Naive thymus-derived CD4-positive, alpha-beta T cell (primary cell): ENCODE measurements at regions of chr10 and their contacts with region 1.

Region 1: GRCh38 chr10:28676968-28677887 is at the start of gene BAMBI:
- DNase-seq: peak; percentile 86 to 95 (median 90)
- ATAC-seq: peak; percentile 97
- H3K4me3 ChIP-seq: peak within 1 kb of the TSS; percentile 57
- H3K4me3 Mint-ChIP-seq: peak within 1 kb of the TSS; percentile 79 to 94 (median 84)
- H3K27ac ChIP-seq: no peak within 1 kb of the TSS
- H3K27ac Mint-ChIP-seq: peak within 1 kb of the TSS in 3 of 9 donors; percentile 24 to 52 (median 43)
- H3K4me1 ChIP-seq: peaks cover 0 to 26% of the 10 kb centered on the region in 2 donors
- H3K4me1 Mint-ChIP-seq: peaks cover 19 to 32% (median 26%) of the 10 kb centered on the region in 7 donors
- H3K27me3 ChIP-seq: peaks cover 11 to 20% of the 10 kb centered on the region in 2 donors
- H3K27me3 Mint-ChIP-seq: peaks cover 63 to 80% (median 70%) of the 10 kb centered on the region in 5 donors
- total RNA-seq, gene BAMBI: 0.12 to 1.6 (median 0.80) TPM in 4 of 5 experiments, not detected in the other

Region 2: GRCh38 chr10:28796606-28797512 is 119.6 kb after region 1 on chr10:
- CTCF ChIA-PET with region 1: no interaction called
- POLR2A ChIA-PET with region 1: no interaction called
- intact Hi-C with region 1: loop called in 1 of 2 experiments (anchors 5 kb)
- DNase-seq: no peak
- ATAC-seq: no peak
- H3K4me3 ChIP-seq: no peak overlapping the region
- H3K4me3 Mint-ChIP-seq: no peak overlapping the region
- H3K27ac ChIP-seq: no peak overlapping the region
- H3K27ac Mint-ChIP-seq: no peak overlapping the region
- H3K4me1 ChIP-seq: no peaks in the 10 kb centered on the region
- H3K4me1 Mint-ChIP-seq: no peaks in the 10 kb centered on the region
- H3K27me3 ChIP-seq: no peaks in the 10 kb centered on the region
- H3K27me3 Mint-ChIP-seq: peaks cover 0 to 4% (median 4%) of the 10 kb centered on the region in 5 donors

Region 3: DNA sequence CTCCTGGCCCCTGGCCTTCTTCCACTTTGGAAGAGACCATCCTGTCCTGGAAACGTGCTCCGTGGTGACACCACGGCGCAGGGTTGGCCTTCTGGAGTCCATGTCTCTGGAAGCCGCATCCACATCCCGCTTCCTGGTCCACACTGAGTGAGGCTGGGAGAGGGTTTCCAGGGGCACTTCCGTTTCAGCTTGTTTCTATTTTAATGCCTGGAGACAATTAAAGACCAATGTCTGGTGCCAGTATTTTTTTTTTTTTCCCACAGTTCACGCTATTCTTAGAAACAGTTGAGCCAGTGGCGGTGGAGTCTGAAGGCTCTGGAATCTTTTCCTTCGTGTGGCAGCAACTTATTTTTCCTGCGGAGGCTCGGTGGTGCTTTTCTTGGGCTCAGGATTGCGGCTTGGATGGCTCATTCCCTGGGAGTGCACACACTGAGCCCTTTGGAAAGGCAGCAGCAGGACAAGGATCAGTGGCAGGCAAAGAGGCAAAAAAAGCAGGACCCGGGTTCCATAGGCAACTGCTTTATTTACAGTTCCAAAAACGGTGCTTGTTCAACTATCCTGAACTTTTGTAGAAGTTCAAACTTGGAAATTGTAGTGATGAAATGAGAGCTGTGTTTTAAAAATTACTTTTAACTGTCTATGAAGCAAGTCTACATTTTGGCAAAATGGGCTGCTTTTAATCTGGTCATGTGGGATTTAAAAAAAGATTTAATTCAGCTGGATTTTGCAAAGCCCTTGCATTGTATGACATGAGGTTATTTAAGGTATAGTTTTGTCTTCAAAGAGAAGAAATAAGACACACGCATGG is 202.9 kb after region 1 on chr10:
- CTCF ChIA-PET with region 1: no interaction called
- POLR2A ChIA-PET with region 1: no interaction called
- intact Hi-C with region 1: loop called in 1 of 2 experiments (anchors 5 kb)
- DNase-seq: no peak
- ATAC-seq: no peak
- H3K4me3 ChIP-seq: no peak overlapping the region
- H3K4me3 Mint-ChIP-seq: no peak overlapping the region
- H3K27ac ChIP-seq: no peak overlapping the region
- H3K27ac Mint-ChIP-seq: no peak overlapping the region
- H3K4me1 ChIP-seq: no peaks in the 10 kb centered on the region
- H3K4me1 Mint-ChIP-seq: no peaks in the 10 kb centered on the region
- H3K27me3 ChIP-seq: no peaks in the 10 kb centered on the region
- H3K27me3 Mint-ChIP-seq: peaks cover 7 to 20% (median 14%) of the 10 kb centered on the region in 5 donors

Region 4: DNA sequence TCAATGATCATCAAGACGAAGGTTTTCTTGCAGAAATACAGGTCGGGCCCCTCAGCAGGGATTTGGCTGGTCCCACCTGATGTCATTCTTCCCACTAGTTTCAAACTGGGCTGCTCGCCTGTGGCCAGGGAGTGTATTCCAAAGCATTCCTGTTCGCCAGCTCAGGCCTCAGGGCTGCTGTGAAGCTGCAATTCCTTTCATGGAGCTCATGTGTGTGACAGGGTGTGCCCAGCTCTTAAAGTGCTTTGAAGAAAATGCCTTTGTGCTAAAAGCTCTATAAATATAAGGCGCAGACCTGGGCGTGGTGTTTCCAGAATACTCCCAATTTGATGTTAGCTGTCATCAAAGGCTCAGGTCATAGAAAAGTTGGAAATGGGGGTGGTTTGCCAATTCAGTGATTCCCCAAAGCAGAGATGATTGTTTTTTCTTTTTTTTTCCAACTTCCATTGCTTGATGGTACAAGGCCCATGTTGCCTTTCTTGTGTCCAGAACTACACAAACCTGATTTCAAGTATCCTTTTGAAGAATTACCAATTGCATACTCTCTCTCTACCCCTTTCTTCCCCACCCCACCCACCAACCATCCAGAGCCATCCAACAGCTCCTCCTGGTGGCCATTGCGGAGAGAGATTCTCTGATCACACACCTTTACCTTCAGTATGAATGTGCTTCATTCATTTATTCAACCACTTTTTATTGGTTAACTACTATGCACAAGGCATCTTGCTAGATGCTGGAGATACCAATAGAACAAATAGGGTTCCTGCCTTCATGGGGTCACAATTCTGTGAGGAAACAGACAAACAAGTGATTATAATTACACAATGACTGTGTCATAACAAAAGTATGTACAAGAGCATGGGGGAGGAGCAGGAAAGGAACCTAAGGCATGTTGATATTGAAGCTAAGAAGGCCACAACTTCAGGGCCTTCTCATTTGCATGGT is 314.4 kb after region 1 on chr10:
- CTCF ChIA-PET with region 1: no interaction called
- POLR2A ChIA-PET with region 1: no interaction called
- intact Hi-C with region 1: loop called (anchors 1 to 5 kb)
- DNase-seq: peak in 5 of 9 donors; percentile 0 to 25 (median 11)
- ATAC-seq: peak; percentile 40
- H3K4me3 ChIP-seq: no peak overlapping the region
- H3K4me3 Mint-ChIP-seq: no peak overlapping the region
- H3K27ac ChIP-seq: no peak overlapping the region
- H3K27ac Mint-ChIP-seq: no peak overlapping the region
- H3K4me1 ChIP-seq: no peaks in the 10 kb centered on the region
- H3K4me1 Mint-ChIP-seq: no peaks in the 10 kb centered on the region
- H3K27me3 ChIP-seq: no peaks in the 10 kb centered on the region
- H3K27me3 Mint-ChIP-seq: peaks cover 0 to 20% (median 9%) of the 10 kb centered on the region in 5 donors

Region 5: DNA sequence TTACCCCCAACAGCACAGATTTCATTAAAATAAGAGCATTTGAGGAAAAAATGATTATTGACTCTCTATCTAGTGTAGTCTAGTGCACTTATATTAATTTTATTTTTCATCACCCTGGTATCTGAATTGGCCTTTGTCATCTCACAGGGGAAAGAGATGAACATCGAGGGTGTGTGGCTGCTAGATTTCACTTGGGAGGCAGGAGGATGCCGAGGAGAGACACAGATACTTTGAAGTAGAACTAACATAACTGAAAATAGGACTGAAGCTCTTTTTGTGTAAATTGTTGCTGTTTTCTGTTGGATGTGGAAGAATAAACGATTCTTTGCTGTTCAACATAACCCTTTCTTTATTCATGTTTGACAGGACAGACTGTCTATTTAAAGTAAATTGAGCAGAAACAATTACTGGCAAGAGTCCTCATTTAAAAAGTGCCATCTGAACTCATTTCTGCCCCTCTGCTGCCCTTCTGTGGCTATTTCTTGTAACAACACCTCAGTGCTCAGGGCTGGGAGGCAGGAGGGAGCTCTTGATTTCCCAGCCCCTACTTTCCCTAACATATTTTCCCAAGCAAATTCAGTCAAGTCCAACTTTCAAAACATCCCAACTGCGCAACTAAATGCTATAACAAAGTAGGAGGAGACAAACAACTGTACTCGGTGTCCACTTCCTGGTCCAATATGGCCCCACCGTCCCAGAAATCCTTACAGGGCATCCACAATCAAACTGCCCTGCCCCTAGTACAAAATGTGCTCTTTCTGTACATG is 627.2 kb after region 1 on chr10:
- CTCF ChIA-PET with region 1: no interaction called
- POLR2A ChIA-PET with region 1: no interaction called
- intact Hi-C with region 1: loop called (anchors 1 to 5 kb)
- DNase-seq: peak in 4 of 9 donors; percentile 13 to 22 (median 16)
- ATAC-seq: no peak
- H3K4me3 ChIP-seq: no peak overlapping the region
- H3K4me3 Mint-ChIP-seq: peak overlapping the region in 2 of 10 donors; percentile 14 to 48
- H3K27ac ChIP-seq: no peak overlapping the region
- H3K27ac Mint-ChIP-seq: no peak overlapping the region
- H3K4me1 ChIP-seq: no peaks in the 10 kb centered on the region
- H3K4me1 Mint-ChIP-seq: peaks cover 0 to 5% (median 3%) of the 10 kb centered on the region in 7 donors
- H3K27me3 ChIP-seq: no peaks in the 10 kb centered on the region
- H3K27me3 Mint-ChIP-seq: peaks cover 11 to 45% (median 37%) of the 10 kb centered on the region in 5 donors

Region 6: GRCh38 chr10:29344073-29344820 is 667.0 kb after region 1 on chr10:
- CTCF ChIA-PET with region 1: no interaction called
- POLR2A ChIA-PET with region 1: no interaction called
- intact Hi-C with region 1: no loop called
- DNase-seq: no peak
- ATAC-seq: no peak
- H3K4me3 ChIP-seq: no peak overlapping the region
- H3K4me3 Mint-ChIP-seq: no peak overlapping the region
- H3K27ac ChIP-seq: no peak overlapping the region
- H3K27ac Mint-ChIP-seq: no peak overlapping the region
- H3K4me1 ChIP-seq: no peaks in the 10 kb centered on the region
- H3K4me1 Mint-ChIP-seq: peaks cover 0 to 2% (median 0%) of the 10 kb centered on the region in 7 donors
- H3K27me3 ChIP-seq: no peaks in the 10 kb centered on the region
- H3K27me3 Mint-ChIP-seq: peaks cover 11 to 32% (median 21%) of the 10 kb centered on the region in 5 donors

Region 7: DNA sequence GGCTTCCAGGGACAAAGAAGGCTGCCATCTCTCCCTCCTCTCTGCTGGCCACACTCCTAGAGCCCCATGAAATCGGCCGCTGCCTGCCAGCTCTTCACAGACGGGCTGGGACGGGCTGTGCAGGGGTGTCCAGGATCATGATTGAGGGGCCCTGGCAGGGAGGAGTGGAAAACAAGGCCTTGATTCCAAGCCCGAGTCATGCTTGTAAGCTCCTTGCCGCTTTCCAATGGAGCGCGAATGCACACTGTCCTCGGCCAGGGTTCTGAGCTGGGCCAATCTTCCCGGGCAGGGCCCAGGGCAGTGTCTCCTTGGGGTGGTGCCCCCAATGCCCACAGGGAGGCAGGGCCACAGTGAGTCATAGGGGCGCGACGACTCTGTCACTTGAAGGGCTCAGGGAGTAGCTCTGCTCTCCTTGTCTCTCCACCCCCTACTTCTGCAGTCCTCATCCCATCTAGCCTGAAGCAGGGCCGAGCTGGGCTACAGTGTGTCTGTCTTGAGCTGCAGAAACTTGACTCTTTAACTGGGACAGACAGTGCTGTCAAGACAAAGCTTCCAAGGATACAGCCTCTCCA is 1143.7 kb after region 1 on chr10:
- CTCF ChIA-PET with region 1: no interaction called
- POLR2A ChIA-PET with region 1: no interaction called
- intact Hi-C with region 1: no loop called
- DNase-seq: no peak
- ATAC-seq: no peak
- H3K4me3 ChIP-seq: no peak overlapping the region
- H3K4me3 Mint-ChIP-seq: no peak overlapping the region
- H3K27ac ChIP-seq: no peak overlapping the region
- H3K27ac Mint-ChIP-seq: no peak overlapping the region
- H3K4me1 ChIP-seq: no peaks in the 10 kb centered on the region
- H3K4me1 Mint-ChIP-seq: no peaks in the 10 kb centered on the region
- H3K27me3 ChIP-seq: no peaks in the 10 kb centered on the region
- H3K27me3 Mint-ChIP-seq: peaks cover 0 to 26% (median 10%) of the 10 kb centered on the region in 5 donors